ENCODE measurements at regions of chr19 and their contacts with region 1.

Region 1: DNA sequence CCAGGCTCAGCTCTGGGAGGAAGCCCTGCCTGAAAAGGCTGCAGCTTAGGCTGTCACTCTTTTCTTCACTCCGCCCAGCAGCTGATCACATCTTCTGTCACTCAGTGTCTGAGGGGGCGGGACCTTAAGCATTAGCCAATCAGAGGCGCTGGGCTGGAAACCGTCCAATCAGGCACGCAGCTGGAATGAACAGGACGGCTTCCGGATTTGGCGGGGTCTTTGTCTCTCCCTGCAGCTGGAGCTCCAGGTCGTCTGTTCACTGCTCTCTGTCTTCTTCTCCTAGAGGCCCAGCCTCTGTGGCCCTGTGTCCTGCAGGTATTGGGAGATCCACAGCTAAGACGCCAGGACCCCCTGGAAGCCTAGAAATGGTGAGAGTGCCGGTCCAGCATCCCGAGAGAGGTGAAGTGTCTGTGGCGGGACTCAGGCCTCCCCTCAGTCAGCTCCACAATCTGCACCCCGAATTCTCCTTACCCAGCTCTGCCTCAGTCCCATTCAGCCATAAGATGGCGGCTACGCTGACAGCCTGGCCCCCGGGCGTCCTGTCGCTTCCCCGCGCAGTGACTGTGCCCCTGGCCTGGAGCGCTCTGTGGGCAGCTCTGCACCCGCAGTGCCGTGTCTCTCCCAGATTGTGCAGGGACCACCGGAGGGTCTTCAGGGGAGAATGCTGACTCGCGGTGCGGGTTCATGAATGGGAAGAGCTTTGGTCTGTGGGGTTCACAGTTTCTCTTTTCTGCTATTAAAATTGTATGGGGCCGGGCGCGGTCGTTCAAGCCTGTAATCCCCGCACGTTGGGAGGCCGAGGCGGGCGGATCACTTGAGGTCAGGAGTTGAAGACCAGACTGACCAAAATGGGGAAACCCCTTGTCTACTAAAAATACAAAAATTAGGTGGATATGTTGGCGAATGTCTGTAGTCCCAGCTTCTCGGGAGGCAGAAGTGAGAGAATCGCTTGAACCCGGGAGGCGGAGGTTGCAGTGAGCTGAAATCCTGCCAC is at the start of gene ZNF66:
- DNase-seq: peak; percentile 88
- CTCF ChIP-seq: no peak

Region 2: DNA sequence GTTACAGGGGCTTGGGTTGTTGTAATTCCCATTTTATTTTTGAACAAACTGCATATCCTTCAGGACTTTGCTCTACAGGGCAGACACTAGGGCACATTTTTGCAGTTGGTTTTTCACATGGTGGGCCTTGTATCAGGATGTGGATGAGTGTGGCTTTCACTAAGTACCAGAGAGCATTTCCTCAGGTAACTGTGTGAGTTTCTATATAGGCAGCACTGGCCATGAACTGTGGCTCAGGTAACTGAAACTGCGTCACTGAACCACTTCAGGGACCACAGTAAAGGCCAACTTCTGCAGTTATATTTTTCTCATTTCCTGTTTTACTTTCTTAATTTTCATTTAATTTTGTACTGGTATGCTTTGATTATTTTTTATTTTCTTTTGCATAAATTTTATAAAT is 442.9 kb before region 1 on chr19:
- CTCF ChIA-PET with region 1: no interaction called
- POLR2A ChIA-PET with region 1: no interaction called
- DNase-seq: no peak
- CTCF ChIP-seq: no peak

Region 3: DNA sequence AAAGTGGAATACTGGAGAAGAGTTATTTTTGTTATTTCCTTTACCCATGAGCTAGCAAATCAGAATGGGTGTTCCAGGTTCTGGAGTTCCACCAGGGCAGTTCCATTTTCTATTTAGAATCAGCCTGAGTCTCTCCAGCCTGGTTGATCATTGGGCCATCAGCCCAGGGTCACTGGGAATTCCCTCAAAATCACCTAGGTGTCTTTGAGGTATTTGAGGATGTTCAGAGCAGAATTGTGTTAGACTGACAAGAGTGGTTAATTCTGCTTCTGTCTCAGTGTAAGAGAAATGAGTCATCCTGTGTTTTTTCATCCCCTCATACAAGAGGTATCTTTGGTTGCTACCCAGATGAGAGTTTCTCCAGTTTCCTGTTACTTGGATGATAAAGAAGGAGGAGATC is 11.4 kb after region 1 on chr19:
- CTCF ChIA-PET with region 1: interaction called, 17 read pairs
- POLR2A ChIA-PET with region 1: no interaction called
- DNase-seq: no peak
- CTCF ChIP-seq: no peak

Measured in GM10248 (cell line).